ENCODE measurements at regions of chr10 and their contacts with region 1.

Region 1: GRCh38 chr10:110610308-110610774 is 33.8 kb upstream of the RBM20 start:
- DNase-seq: peak; percentile 72
- ATAC-seq: peak; percentile 16
- H3K4me3 Mint-ChIP-seq: no peak overlapping the region
- H3K27ac Mint-ChIP-seq: no peak overlapping the region
- H3K4me1 Mint-ChIP-seq: peaks cover 38% of the 10 kb centered on the region
- H3K27me3 Mint-ChIP-seq: no peaks in the 10 kb centered on the region

Region 2: GRCh38 chr10:110113670-110114337 is 496.5 kb before region 1 on chr10:
- CTCF ChIA-PET with region 1: no interaction called
- POLR2A ChIA-PET with region 1: no interaction called
- intact Hi-C with region 1: no loop called
- DNase-seq: no peak
- ATAC-seq: no peak
- H3K4me3 Mint-ChIP-seq: no peak overlapping the region
- H3K27ac Mint-ChIP-seq: peak overlapping the region; percentile 7
- H3K4me1 Mint-ChIP-seq: peaks cover 10% of the 10 kb centered on the region
- H3K27me3 Mint-ChIP-seq: no peaks in the 10 kb centered on the region

Region 3: DNA sequence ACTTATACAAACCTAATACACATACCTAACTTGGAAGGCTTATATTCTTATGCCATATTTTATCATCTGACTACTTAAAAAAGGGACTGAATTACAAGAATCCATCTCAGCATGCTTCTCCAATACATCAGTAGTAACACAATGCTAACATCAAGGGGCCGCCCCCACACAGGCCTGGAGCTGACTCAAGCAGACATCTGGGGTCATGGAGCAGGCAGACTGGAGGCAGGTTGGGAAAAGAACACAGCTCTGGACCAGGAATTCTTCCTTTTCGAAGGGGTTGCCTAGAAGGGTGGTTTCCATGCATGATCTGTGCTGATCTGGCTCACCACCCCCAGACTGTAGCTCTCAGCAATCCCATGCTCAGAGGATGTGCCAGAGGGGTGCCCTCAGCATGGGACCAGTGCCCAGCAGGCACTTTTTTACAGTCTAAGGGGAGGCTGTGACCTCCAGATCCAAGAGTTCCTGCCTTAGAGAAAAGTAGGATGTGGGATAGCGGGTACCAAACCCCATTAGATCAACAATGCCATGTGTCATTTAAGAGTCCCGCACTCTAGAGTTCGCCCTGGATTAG is 138.7 kb before region 1 on chr10:
- CTCF ChIA-PET with region 1: no interaction called
- POLR2A ChIA-PET with region 1: no interaction called
- intact Hi-C with region 1: no loop called
- DNase-seq: no peak
- ATAC-seq: no peak
- H3K4me3 Mint-ChIP-seq: no peak overlapping the region
- H3K27ac Mint-ChIP-seq: no peak overlapping the region
- H3K4me1 Mint-ChIP-seq: no peaks in the 10 kb centered on the region
- H3K27me3 Mint-ChIP-seq: no peaks in the 10 kb centered on the region

Region 4: DNA sequence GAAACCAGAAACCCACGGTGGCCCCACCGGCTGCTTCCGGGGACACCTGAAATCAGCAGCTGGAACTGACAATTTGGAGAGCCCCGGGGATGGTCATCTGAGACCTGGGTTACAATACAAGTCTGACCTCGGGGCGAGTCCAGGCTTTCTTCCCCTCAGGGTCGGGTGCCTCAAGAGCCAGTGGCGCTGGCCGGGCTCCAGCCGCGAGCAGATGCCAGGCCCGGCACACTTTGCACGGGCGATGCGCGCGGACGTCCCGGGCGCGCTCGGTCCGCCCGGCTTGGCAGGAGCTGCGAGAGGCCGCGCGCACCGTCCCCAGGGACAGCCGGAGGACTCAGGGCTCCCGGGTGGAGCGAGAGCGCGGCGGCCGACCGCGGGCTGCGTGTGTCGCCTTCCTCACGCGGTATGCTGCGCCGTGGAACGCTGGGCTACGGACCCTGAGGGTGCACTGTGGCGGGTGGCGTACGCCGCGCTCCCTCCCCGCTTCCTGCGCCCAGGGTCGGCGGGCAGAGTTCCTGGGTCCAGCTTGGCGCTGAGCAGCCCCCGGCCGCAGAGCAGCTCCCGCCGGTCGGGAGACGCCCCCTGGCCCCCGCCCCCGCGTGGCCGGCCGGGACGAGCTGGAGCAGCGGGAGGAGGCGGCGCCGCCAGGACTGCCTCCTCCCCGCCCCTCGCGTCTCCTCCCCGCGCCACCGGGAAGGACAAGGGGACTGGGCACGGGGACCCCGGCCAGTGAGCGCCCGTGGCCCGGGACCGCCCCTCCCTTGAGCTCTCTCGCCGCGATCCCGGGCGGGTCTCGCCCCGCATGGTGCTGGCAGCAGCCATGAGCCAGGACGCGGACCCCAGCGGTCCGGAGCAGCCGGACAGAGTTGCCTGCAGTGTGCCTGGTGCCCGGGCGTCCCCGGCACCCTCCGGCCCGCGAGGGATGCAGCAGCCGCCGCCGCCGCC is 33.6 kb after region 1 on chr10 and contains the start of gene RBM20:
- CTCF ChIA-PET with region 1: interaction called, 11 read pairs
- POLR2A ChIA-PET with region 1: no interaction called
- intact Hi-C with region 1: loop called in 1 of 2 experiments (anchors 2 kb)
- DNase-seq: peak; percentile 40
- ATAC-seq: peak; percentile 36
- H3K4me3 Mint-ChIP-seq: peak within 1 kb of the TSS; percentile 73
- H3K27ac Mint-ChIP-seq: peak within 1 kb of the TSS; percentile 52
- H3K4me1 Mint-ChIP-seq: peaks cover 29% of the 10 kb centered on the region
- H3K27me3 Mint-ChIP-seq: peaks cover 48% of the 10 kb centered on the region
- total RNA-seq, gene RBM20: 0.05 to 0.40 TPM

Region 5: GRCh38 chr10:110681023-110681681 is 70.8 kb after region 1 on chr10:
- CTCF ChIA-PET with region 1: interaction called, 11 read pairs
- POLR2A ChIA-PET with region 1: no interaction called
- intact Hi-C with region 1: loop called (anchors 1 to 2 kb)
- DNase-seq: peak; percentile 65
- ATAC-seq: peak; percentile 55
- H3K4me3 Mint-ChIP-seq: no peak overlapping the region
- H3K27ac Mint-ChIP-seq: no peak overlapping the region
- H3K4me1 Mint-ChIP-seq: peaks cover 3% of the 10 kb centered on the region
- H3K27me3 Mint-ChIP-seq: peaks cover 2% of the 10 kb centered on the region

Region 6: GRCh38 chr10:110774069-110775019 is 164.0 kb after region 1 on chr10:
- CTCF ChIA-PET with region 1: no interaction called
- POLR2A ChIA-PET with region 1: no interaction called
- intact Hi-C with region 1: loop called in 1 of 2 experiments (anchors 10 kb)
- DNase-seq: peak; percentile 67
- ATAC-seq: peak; percentile 94
- H3K4me3 Mint-ChIP-seq: peak overlapping the region; percentile 18
- H3K27ac Mint-ChIP-seq: peak overlapping the region; percentile 89
- H3K4me1 Mint-ChIP-seq: peaks cover 61% of the 10 kb centered on the region
- H3K27me3 Mint-ChIP-seq: peaks cover 2% of the 10 kb centered on the region

Region 7: DNA sequence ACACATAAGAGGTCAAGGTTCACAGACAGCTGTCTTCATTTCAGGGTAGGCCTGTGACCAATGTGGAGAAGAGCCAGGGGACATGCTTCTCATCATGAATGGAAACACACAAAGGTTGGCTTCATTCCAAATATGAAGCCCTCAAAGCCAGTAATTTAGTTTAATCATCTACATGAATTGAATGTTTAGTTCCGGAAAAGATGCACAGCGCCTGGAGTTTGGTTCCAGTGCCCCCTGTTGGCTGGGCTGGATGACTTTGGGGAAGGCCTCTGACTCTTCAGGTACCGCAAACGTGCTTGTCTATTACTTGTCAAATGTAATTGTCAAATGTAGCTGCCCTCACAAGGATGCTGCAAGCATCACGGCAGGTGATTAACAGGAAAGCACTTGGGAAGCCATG is 597.2 kb after region 1 on chr10:
- CTCF ChIA-PET with region 1: no interaction called
- POLR2A ChIA-PET with region 1: no interaction called
- intact Hi-C with region 1: loop called in 1 of 2 experiments (anchors 5 kb)
- DNase-seq: peak; percentile 59
- ATAC-seq: no peak
- H3K4me3 Mint-ChIP-seq: no peak overlapping the region
- H3K27ac Mint-ChIP-seq: no peak overlapping the region
- H3K4me1 Mint-ChIP-seq: no peaks in the 10 kb centered on the region
- H3K27me3 Mint-ChIP-seq: peaks cover 4% of the 10 kb centered on the region